Left cardiac atrium (tissue), 4 donors: ENCODE measurements at regions of chr2 and their contacts with region 1.

Region 1: GRCh38 chr2:173075781-173076580 is at the start of gene MAP3K20:
- DNase-seq: peak; percentile 86
- ATAC-seq: peak; percentile 90 to 94
- total RNA-seq, gene MAP3K20: 204 to 206 TPM

Region 2: GRCh38 chr2:173027181-173028128 is 48.5 kb before region 1 on chr2:
- intact Hi-C with region 1: loop called (anchors 5 kb)
- DNase-seq: peak; percentile 83
- ATAC-seq: peak; percentile 83

Region 3: GRCh38 chr2:173033084-173033483 is 42.9 kb before region 1 on chr2:
- intact Hi-C with region 1: loop called (anchors 5 kb)
- DNase-seq: no peak
- ATAC-seq: no peak

Region 4: DNA sequence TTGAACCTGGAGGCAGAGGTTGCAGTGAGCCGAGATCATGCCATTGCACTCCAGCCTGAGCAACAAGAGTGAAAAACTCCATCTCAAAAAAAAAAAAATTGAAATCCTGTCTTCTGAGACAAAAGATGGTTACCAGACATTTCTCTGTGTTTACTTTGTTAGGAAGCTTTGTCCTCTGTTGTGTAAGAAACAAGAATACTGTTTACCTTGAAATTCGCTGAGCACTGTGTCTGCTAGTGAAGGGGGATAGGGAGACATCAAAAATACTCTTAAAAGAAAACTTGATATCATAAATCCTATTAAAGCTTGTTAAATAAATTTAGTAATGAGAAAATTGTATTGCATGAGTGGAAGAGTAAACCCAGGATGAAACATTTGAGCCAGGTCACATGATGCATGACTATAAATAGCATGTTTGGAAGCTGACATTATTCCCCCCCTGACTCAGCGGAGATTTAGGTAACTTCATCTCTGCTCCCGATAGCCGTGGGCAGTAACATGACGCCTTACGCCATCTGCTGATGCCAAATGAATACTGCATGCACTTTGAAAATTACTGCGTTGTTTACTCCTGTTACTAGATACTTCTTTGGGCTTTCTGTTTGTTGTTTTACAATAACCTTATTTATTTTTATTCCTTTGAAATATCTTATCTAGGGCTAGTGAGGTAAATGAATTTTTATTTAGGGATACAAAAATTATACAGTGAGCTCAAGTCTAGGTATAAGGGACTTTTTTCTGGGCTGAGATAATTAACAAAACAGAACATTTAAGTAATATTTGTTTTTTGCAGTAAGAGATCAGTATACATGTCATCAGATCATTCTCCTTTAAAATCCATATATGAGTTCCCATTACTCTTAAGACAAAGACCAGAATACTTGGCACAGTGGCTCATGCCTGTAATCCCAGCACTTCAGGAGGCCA is 134.6 kb after region 1 on chr2:
- intact Hi-C with region 1: loop called in 1 of 2 experiments (anchors 5 kb)
- DNase-seq: peak; percentile 61
- ATAC-seq: peak; percentile 95

Region 5: DNA sequence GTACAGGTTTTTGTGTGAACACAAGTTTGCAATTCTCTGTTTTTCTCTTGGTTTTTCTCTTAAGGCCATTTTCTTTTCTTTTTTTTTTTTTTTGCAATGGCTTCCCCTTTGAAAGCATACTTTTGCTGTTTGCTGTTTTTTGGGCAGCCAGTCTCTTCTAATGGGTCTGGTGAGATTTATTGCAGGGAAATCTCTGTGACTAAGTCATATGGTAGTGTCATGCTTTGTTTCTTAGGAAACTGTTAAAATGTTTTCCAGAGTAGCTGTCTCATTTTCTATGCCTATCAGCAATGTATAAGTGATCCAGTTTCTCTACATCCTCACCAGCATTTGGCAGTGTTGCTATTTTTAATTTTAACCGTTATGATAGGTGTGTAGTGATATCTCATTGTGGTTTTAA is 250.8 kb after region 1 on chr2:
- intact Hi-C with region 1: no loop called
- DNase-seq: no peak
- ATAC-seq: no peak